PC-9 (cell line): ENCODE measurements at regions of chr2 and their contacts with region 1.

Region 1: DNA sequence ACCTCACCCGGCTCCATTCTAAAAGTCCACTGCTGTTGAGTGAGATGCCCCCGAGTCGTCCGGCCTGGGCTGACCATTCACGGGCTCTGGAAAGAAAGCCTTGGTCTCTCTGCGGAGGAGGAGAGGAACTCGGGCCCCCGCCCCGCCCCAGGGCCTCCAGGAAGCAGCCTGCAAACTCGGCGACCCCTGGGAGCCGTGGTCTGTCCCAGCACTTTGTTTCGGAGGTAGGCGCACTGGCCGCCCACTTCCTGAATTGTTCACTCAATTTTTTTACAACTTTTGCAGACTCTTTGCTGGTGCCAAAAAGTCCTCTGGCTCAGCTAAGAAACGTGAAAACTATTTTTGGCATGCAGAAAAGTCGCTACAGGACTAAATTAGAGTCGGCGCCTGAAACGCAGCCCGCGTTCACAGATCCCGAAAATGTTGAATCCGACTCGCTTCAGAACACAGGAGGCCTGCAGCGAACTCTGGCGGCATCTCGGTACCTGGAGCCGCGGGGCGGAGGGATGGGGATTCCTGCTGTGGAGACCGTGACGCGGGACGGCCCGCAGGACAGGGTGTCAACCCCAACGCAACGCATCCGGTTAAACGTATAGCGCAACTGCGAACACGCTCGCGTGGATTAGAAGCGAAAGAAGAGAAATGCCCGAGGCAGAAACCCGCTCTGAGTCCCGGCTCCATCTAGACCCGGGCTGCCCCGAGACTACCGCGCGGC is 1.5 kb downstream of the PXDN start:
- DNase-seq: peak; percentile 77
- H3K4me3 ChIP-seq: peak overlapping the region; percentile 64
- H3K27ac ChIP-seq: peak overlapping the region; percentile 66
- H3K4me1 ChIP-seq: peaks cover 13% of the 10 kb centered on the region
- H3K27me3 ChIP-seq: peaks cover 10% of the 10 kb centered on the region; the same call in 1 of the 2 replicates
- CTCF ChIP-seq: peak; percentile 48

Region 2: GRCh38 chr2:1509271-1510065 is 233.4 kb before region 1 on chr2:
- CTCF ChIA-PET with region 1: no interaction called
- POLR2A ChIA-PET with region 1: no interaction called
- intact Hi-C with region 1: no loop called
- DNase-seq: no peak
- H3K4me3 ChIP-seq: no peak overlapping the region
- H3K27ac ChIP-seq: no peak overlapping the region
- H3K4me1 ChIP-seq: no peaks in the 10 kb centered on the region
- H3K27me3 ChIP-seq: peaks cover 54% of the 10 kb centered on the region
- CTCF ChIP-seq: no peak

Region 3: DNA sequence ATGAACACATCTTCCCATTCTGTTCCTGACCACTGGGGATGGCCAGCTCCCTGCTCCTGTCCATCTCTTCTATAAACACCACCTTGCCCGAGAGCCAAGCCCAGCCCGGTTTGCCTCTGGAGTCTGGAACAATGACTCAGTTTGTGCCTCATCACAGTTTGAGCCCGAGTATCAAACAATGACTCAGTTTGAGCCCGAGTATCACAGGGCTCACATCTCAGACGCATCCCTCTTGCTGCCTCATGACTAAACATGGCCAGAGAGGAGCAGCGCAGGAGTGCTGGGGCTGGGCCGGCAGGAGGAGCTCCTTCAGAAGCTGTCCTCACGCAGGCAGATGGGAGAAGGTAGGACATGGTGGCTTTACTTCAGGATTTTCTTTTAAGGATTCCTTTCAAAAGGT is 67.2 kb before region 1 on chr2:
- CTCF ChIA-PET with region 1: interaction called, 5 read pairs
- POLR2A ChIA-PET with region 1: no interaction called
- intact Hi-C with region 1: loop called (anchors 2 kb)
- DNase-seq: peak; percentile 62 to 87
- H3K4me3 ChIP-seq: no peak overlapping the region
- H3K27ac ChIP-seq: peak overlapping the region; percentile 59
- H3K4me1 ChIP-seq: peaks cover 5% of the 10 kb centered on the region
- H3K27me3 ChIP-seq: peaks cover 15% of the 10 kb centered on the region; the same call in 1 of the 2 replicates
- CTCF ChIP-seq: peak; percentile 57

Region 4: DNA sequence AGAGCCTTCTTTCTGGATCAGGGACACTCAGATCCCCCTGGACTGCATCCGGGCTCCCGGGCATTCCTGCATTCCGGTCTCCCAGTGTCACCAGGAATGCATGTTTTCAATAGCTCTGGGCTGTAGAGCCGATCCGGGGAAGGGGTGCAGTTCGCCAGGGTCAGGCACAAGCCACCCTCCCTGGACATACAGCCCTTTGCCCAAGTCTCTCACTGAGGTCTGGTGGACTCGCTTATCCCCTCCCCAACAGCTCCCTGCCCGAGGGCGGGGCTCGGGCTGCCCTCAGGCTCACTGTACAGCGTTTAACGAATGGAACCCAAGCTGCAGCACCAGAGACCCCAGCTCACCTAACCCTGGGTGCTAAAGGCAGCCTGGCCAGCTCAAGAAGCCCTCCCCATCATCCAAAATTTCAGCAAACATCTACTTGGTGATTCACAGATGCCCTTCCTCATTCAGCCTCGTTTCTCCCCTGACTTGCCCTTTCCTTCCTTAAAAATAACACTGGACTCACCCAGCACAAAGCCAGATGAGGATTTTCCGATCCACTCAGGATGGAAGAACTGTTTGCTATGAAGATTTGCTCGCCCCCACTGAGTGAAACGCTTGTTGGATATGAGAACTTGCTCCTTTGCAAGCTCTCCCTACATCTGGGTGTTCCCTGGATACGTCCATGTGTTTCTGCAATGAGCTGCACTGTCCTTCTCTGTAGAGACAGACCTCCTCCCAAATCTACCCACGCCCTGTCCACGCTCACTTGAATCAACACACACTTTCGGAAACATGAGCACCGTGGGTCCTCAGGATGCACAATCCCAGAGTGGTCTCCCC is 56.7 kb before region 1 on chr2:
- CTCF ChIA-PET with region 1: no interaction called
- POLR2A ChIA-PET with region 1: no interaction called
- intact Hi-C with region 1: loop called (anchors 2 kb)
- DNase-seq: peak; percentile 67 to 74
- H3K4me3 ChIP-seq: no peak overlapping the region
- H3K27ac ChIP-seq: peak overlapping the region; percentile 70
- H3K4me1 ChIP-seq: peaks cover 50% of the 10 kb centered on the region
- H3K27me3 ChIP-seq: peaks cover 18% of the 10 kb centered on the region; the same call in 1 of the 2 replicates
- CTCF ChIP-seq: no peak

Region 5: DNA sequence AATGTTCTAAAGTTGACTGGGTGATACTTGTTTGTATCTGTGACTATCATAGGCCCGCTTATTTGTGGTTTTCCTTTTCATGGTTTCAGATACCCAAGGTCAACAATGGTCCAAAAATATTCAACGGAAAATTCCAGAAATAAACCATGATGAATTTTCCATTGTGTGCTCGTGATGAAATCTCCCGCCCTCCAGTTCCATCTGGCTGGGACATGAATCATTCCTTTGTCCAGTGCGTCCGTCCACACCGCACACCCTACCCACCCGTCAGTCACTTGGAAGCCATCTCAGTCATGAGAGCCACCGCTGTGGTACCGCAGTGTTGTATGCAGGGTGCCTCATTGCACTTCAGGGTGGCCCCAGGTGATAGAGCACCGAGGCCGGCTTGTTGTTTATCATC is 269.7 kb after region 1 on chr2:
- CTCF ChIA-PET with region 1: no interaction called
- POLR2A ChIA-PET with region 1: no interaction called
- intact Hi-C with region 1: no loop called
- DNase-seq: no peak
- H3K4me3 ChIP-seq: no peak overlapping the region
- H3K27ac ChIP-seq: no peak overlapping the region
- H3K4me1 ChIP-seq: no peaks in the 10 kb centered on the region
- H3K27me3 ChIP-seq: peaks cover 60% of the 10 kb centered on the region
- CTCF ChIP-seq: no peak